GM12878 (cell line): ENCODE measurements at regions of chr10 and their contacts with region 1.

Region 1: GRCh38 chr10:110354322-110354766 is 49.6 kb upstream of the SMNDC1 start:
- DNase-seq: peak; percentile 58
- ATAC-seq: peak; percentile 59
- H3K4me3 ChIP-seq: no peak overlapping the region
- H3K27ac ChIP-seq: peak overlapping the region; percentile 100
- H3K4me1 ChIP-seq: peaks cover 54% of the 10 kb centered on the region
- H3K27me3 ChIP-seq: no peaks in the 10 kb centered on the region
- CTCF ChIP-seq: peak; percentile 80 to 88 (median 87)
- EP300 ChIP-seq: no peak
- POLR2A ChIP-seq: no peak
- RAD21 ChIP-seq: peak; percentile 81

Region 2: DNA sequence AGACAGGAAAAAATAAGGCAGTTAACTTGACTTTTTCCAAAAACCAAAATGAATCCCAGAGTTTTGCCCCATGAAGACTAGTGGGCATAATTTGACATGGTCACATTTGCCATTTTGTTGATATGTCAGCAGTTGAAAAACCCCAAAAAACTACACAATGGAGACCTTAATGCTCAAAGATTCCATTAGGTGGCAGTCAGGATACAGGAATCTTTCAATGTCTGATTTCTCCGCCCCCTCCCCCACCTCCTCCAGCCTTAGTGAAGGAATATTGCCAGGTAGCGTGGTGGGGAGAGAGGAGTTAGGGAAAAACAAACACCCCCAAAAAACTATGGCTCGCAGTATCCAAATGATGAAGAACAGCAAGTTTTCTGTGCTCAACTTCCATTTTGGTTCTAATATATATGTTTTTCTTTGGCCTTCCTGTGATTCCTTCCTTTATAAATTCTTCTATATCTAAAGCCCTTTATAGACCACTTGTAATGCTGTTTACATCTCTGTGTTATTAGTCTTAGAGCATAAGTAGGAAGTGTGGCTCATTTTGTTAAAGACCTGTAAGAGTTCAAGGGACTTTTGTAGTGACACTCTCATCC is 42.9 kb before region 1 on chr10:
- CTCF ChIA-PET with region 1: interaction called, 39 read pairs
- POLR2A ChIA-PET with region 1: interaction called, 7 read pairs
- RAD21 ChIA-PET with region 1: interaction called, 23 read pairs
- SMC1A ChIA-PET with region 1: interaction called, 31 read pairs
- in situ Hi-C with region 1: no loop called
- intact Hi-C with region 1: loop called (anchors 1 kb)
- DNase-seq: peak; percentile 47
- ATAC-seq: peak; percentile 83
- H3K4me3 ChIP-seq: no peak overlapping the region
- H3K27ac ChIP-seq: no peak overlapping the region
- H3K4me1 ChIP-seq: 0 out of 2 replicates have a peak, but pooled peaks cover 2% of the 10 kb centered on the region
- H3K27me3 ChIP-seq: no peaks in the 10 kb centered on the region
- CTCF ChIP-seq: peak; percentile 62 to 76 (median 68); a peak in 5 of 6 replicates
- EP300 ChIP-seq: no peak
- POLR2A ChIP-seq: no peak
- RAD21 ChIP-seq: peak; percentile 96

Region 3: GRCh38 chr10:110368002-110368401 is 13.7 kb after region 1 on chr10:
- CTCF ChIA-PET with region 1: interaction called, 27 read pairs
- POLR2A ChIA-PET with region 1: interaction called, 37 read pairs
- RAD21 ChIA-PET with region 1: interaction called, 51 read pairs
- SMC1A ChIA-PET with region 1: interaction called, 64 read pairs
- in situ Hi-C with region 1: no loop called
- intact Hi-C with region 1: no loop called
- DNase-seq: no peak
- ATAC-seq: peak; percentile 86
- H3K4me3 ChIP-seq: no peak overlapping the region
- H3K27ac ChIP-seq: no peak overlapping the region; the same call in 1 of the 2 replicates
- H3K4me1 ChIP-seq: peaks cover 29% of the 10 kb centered on the region
- H3K27me3 ChIP-seq: no peaks in the 10 kb centered on the region
- CTCF ChIP-seq: no peak
- EP300 ChIP-seq: peak in 1 of 2 experiments; percentile 43; a peak in 1 of 4 replicates
- POLR2A ChIP-seq: no peak
- RAD21 ChIP-seq: no peak

Region 4: DNA sequence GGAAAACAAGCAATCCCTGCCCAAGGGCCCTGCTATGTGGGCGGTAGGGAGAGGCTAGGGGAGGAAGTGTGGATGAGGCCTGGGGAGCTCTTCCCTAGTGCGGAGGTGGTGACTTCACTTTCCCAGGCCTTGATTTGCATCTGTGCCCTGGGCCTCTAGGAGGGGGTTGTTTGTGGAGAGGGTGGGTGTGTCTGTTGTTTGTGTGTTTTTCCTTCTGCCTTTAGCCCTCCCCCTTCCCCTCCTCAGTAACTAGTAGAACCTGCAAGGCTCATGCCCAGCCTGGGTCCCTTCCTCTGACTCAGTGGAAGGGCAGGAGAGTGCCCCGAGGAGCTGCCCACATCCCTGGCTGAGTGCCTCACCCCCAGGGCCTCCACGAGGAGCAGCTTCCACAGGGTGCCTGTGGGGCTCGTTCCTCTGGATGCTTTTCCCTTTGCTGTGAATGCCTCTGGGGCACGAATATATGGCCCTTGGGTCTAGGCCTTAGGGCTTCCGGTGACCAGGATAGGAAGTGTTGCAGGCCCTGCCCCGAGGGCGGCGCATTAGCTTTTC is 53.9 kb after region 1 on chr10:
- CTCF ChIA-PET with region 1: interaction called, 124 read pairs
- POLR2A ChIA-PET with region 1: interaction called, 90 read pairs
- RAD21 ChIA-PET with region 1: interaction called, 241 read pairs
- SMC1A ChIA-PET with region 1: interaction called, 283 read pairs
- in situ Hi-C with region 1: loop called (anchors 5 kb)
- intact Hi-C with region 1: no loop called
- DNase-seq: no peak
- ATAC-seq: no peak
- H3K4me3 ChIP-seq: no peak overlapping the region
- H3K27ac ChIP-seq: no peak overlapping the region
- H3K4me1 ChIP-seq: peaks cover 48% of the 10 kb centered on the region
- H3K27me3 ChIP-seq: no peaks in the 10 kb centered on the region
- CTCF ChIP-seq: no peak
- EP300 ChIP-seq: no peak
- POLR2A ChIP-seq: no peak
- RAD21 ChIP-seq: no peak

Region 5: GRCh38 chr10:110497438-110498086 is 143.2 kb after region 1 on chr10 and contains the start of gene DUSP5:
- CTCF ChIA-PET with region 1: interaction called, 251 read pairs
- POLR2A ChIA-PET with region 1: interaction called, 102 read pairs
- RAD21 ChIA-PET with region 1: interaction called, 325 read pairs
- SMC1A ChIA-PET with region 1: interaction called, 261 read pairs
- in situ Hi-C with region 1: loop called (anchors 5 kb)
- intact Hi-C with region 1: loop called (anchors 1 kb)
- DNase-seq: peak; percentile 75
- ATAC-seq: peak; percentile 51
- H3K4me3 ChIP-seq: peak within 1 kb of the TSS; percentile 95
- H3K27ac ChIP-seq: peak within 1 kb of the TSS; percentile 91
- H3K4me1 ChIP-seq: peaks cover 26% of the 10 kb centered on the region
- H3K27me3 ChIP-seq: no peaks in the 10 kb centered on the region
- CTCF ChIP-seq: no peak
- EP300 ChIP-seq: peak in 1 of 2 experiments; percentile 13; a peak in 2 of 4 replicates
- POLR2A ChIP-seq: peak; percentile 90
- RAD21 ChIP-seq: no peak
- polyA plus RNA-seq, gene DUSP5: 7.5 to 14.6 TPM

Region 6: DNA sequence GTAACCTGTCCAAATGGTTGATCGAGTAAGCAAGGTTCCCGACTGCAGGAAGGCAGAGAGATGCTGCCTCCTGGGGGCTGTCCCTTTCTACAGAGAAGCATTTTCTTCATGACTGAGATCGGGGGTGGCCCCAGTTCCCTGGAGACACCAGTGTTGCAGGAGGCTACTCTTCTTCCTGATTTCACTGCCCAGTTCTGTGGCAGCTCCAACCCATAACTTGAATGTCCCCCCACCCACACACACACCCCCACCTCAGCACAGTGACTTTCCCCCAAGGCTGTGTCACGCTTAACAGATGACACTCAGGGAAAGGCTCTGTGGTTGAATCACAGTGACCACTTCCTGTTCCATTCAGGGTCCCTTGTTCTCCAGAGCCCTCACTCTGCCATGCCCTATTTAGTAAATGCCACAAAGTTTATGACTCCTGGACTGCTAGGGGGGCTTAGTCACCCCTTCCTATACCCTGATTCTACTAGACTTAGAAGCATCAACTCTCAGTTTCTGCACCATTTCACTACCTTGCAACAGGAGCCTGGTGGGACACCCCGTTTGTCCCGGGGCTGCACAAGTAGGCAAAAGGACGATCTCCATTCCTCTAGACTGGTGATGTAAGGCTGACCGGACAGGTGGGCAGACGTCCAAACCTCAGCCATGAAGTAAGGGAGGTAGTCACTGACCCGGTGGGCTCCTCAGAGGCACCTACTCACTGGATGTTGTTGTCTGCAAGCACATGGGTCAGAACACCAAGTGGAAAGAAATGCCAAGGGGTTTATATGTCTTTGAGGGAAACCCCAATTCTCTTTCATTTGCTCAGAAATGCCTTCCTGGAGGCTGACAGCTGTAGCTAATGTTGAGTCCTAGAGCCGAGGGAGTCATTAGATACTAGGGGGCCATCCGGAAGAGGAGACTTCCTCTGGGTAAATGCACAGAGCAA is 181.9 kb after region 1 on chr10:
- CTCF ChIA-PET with region 1: interaction called, 85 read pairs
- POLR2A ChIA-PET with region 1: interaction called, 6 read pairs
- RAD21 ChIA-PET with region 1: interaction called, 10 read pairs
- SMC1A ChIA-PET with region 1: interaction called, 54 read pairs
- in situ Hi-C with region 1: no loop called
- intact Hi-C with region 1: loop called (anchors 2 kb)
- DNase-seq: peak; percentile 87
- ATAC-seq: peak; percentile 91
- H3K4me3 ChIP-seq: no peak overlapping the region; the same call in 1 of the 2 replicates
- H3K27ac ChIP-seq: peak overlapping the region; percentile 67
- H3K4me1 ChIP-seq: peaks cover 29% of the 10 kb centered on the region
- H3K27me3 ChIP-seq: no peaks in the 10 kb centered on the region
- CTCF ChIP-seq: peak; percentile 28 to 48 (median 37); a peak in 4 of 6 replicates
- EP300 ChIP-seq: peak; percentile 84 to 85; a peak in 3 of 4 replicates
- POLR2A ChIP-seq: no peak
- RAD21 ChIP-seq: peak; percentile 68